PC-3 (cell line): ENCODE measurements at regions of chr3 and their contacts with region 1.

Region 1: GRCh38 chr3:187679638-187680396 is 9.6 kb upstream of the SST start:
- DNase-seq: peak; percentile 87
- ATAC-seq: peak; percentile 87
- H3K4me3 ChIP-seq: no peak overlapping the region
- H3K27ac ChIP-seq: no peak overlapping the region
- H3K4me1 ChIP-seq: no peaks in the 10 kb centered on the region
- H3K27me3 ChIP-seq: peaks cover 41% of the 10 kb centered on the region
- CTCF ChIP-seq: peak; percentile 92

Region 2: GRCh38 chr3:187616307-187616972 is 63.4 kb before region 1 on chr3:
- CTCF ChIA-PET with region 1: interaction called, 6 read pairs
- POLR2A ChIA-PET with region 1: no interaction called
- intact Hi-C with region 1: loop called (anchors 1 kb)
- DNase-seq: peak; percentile 66
- ATAC-seq: peak; percentile 74
- H3K4me3 ChIP-seq: no peak overlapping the region
- H3K27ac ChIP-seq: no peak overlapping the region
- H3K4me1 ChIP-seq: no peaks in the 10 kb centered on the region
- H3K27me3 ChIP-seq: peaks cover 75% of the 10 kb centered on the region
- CTCF ChIP-seq: peak; percentile 87

Region 3: GRCh38 chr3:187702507-187703033 is 22.8 kb after region 1 on chr3 and contains the start of gene RTP2:
- CTCF ChIA-PET with region 1: interaction called, 10 read pairs
- POLR2A ChIA-PET with region 1: no interaction called
- intact Hi-C with region 1: no loop called
- DNase-seq: no peak
- ATAC-seq: no peak
- H3K4me3 ChIP-seq: no peak within 1 kb of the TSS
- H3K27ac ChIP-seq: no peak within 1 kb of the TSS
- H3K4me1 ChIP-seq: no peaks in the 10 kb centered on the region
- H3K27me3 ChIP-seq: 0 out of 2 replicates have a peak, but pooled peaks cover 7% of the 10 kb centered on the region
- CTCF ChIP-seq: no peak
- total RNA-seq, gene RTP2: not detected in 2 replicates

Region 4: DNA sequence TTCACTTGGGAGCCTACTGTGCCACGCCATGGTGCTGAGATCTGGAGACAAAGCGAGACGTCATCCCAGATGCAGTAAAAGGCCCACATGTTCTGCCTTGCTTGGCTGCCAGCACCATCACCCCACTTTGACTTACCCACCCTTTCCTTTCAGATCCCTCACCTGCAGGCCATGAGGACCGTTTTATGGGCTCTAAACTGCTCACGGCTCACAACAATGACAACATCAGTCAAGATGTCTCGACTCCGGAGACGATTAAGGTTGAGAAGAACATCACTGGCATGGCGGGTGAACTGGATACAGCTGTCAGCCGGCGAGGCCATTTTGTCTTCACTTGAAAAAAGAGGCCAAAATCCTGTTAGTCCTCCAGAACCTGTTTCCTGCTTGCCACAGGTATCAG is 53.6 kb after region 1 on chr3:
- CTCF ChIA-PET with region 1: no interaction called
- POLR2A ChIA-PET with region 1: no interaction called
- intact Hi-C with region 1: no loop called
- DNase-seq: no peak
- ATAC-seq: no peak
- H3K4me3 ChIP-seq: no peak overlapping the region
- H3K27ac ChIP-seq: no peak overlapping the region
- H3K4me1 ChIP-seq: peaks cover 18% of the 10 kb centered on the region
- H3K27me3 ChIP-seq: no peaks in the 10 kb centered on the region
- CTCF ChIP-seq: no peak

Region 5: GRCh38 chr3:188178293-188178936 is 498.6 kb after region 1 on chr3:
- CTCF ChIA-PET with region 1: no interaction called
- POLR2A ChIA-PET with region 1: no interaction called
- intact Hi-C with region 1: no loop called
- DNase-seq: no peak
- ATAC-seq: no peak
- H3K4me3 ChIP-seq: no peak overlapping the region
- H3K27ac ChIP-seq: no peak overlapping the region
- H3K4me1 ChIP-seq: peaks cover 14% of the 10 kb centered on the region
- H3K27me3 ChIP-seq: no peaks in the 10 kb centered on the region
- CTCF ChIP-seq: no peak